ENCODE measurements at regions of chr17 and their contacts with region 1.

Region 1: DNA sequence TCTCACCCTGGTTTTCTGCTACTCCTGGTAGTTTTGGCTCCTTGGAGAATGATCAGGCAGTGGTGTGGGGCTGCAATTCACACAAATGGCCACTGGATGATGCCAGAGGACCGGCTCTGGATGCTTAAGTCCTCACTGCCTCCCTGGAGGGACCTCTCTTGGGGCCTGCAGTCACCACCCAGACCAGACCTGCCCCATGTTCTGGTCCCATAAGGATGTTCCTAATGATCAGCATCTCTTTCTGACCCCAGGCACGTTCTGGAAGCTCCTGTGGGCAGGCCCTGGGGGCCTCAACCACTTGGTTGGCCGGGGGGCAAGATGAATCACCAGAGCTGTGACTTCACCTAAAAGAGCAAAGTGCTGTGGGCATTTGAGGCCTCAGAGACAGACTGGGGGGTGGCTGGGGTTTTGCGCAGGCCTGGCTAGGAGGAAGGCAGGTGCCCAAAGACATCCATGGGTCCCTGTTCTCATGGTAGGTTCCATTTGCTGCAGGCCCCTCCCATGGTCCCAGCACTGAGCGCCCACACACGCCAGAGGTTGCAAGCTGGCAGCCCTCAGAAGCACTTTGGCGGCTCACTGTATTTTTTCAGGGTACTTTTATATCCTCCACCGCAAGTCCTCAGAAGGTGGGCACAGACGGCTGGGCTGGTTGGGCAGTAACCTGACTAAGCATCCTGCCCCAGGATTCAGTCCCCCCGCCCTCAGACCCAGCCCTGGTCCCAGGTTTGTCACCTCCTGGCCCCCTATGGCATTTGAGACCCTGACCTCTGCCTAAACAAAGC is 53.2 kb downstream of the NT5M start:
- DNase-seq: peak; percentile 84
- ATAC-seq: peak; percentile 94
- H3K4me3 ChIP-seq: no peak overlapping the region
- H3K27ac ChIP-seq: no peak overlapping the region
- H3K4me1 ChIP-seq: peaks cover 5% of the 10 kb centered on the region
- H3K27me3 ChIP-seq: no peaks in the 10 kb centered on the region
- CTCF ChIP-seq: peak; percentile 100

Region 2: GRCh38 chr17:17494870-17495535 is 138.7 kb after region 1 on chr17:
- intact Hi-C with region 1: loop called (anchors 5 kb)
- DNase-seq: peak; percentile 80
- ATAC-seq: peak; percentile 2
- H3K4me3 ChIP-seq: peak overlapping the region; percentile 68
- H3K27ac ChIP-seq: peak overlapping the region; percentile 84
- H3K4me1 ChIP-seq: peaks cover 18% of the 10 kb centered on the region
- H3K27me3 ChIP-seq: no peaks in the 10 kb centered on the region
- CTCF ChIP-seq: no peak

Region 3: DNA sequence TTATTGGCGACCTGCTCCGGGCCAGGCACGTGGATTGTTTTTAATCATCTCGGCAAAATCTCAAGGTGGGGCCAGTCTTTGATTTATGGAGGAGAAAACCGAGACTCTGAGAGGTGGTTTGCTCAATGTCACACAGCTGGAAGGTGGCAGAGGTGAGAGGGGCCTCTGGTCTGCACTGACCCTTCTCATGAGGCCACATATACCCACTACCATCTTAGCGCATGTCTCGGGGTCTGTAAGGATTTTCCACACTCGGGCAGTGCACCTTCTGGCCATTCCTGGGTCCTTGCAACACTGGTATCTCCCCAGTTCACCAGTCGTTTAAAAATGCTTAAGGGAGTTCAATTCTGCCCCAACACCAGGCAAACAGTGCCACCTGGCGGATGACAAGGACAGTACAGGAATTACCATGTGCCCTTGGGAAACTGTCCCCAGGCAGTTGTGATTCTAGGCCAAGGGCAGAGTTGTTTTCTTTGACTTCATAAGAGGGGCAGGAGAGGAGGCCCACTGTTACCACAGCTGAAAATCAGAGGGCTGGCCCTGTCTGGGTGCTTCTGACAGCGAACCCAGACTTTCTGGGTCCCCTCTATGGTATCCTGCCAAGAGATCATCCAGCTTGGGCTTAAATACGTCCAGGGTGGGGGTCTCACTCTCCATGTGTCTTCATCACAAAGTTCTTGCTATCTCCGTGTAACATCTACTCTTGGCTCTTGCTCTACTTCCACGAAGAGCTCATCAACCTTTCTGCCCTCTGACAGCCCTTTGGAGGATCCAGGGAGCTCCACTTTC is 285.5 kb after region 1 on chr17:
- intact Hi-C with region 1: loop called (anchors 5 kb)
- DNase-seq: peak; percentile 82
- ATAC-seq: peak; percentile 94
- H3K4me3 ChIP-seq: no peak overlapping the region
- H3K27ac ChIP-seq: no peak overlapping the region
- H3K4me1 ChIP-seq: no peaks in the 10 kb centered on the region
- H3K27me3 ChIP-seq: no peaks in the 10 kb centered on the region
- CTCF ChIP-seq: peak; percentile 92

Measured in upper lobe of right lung (tissue), 1 donor.